ENCODE measurements at regions of chr7 and their contacts with region 1.

Region 1: DNA sequence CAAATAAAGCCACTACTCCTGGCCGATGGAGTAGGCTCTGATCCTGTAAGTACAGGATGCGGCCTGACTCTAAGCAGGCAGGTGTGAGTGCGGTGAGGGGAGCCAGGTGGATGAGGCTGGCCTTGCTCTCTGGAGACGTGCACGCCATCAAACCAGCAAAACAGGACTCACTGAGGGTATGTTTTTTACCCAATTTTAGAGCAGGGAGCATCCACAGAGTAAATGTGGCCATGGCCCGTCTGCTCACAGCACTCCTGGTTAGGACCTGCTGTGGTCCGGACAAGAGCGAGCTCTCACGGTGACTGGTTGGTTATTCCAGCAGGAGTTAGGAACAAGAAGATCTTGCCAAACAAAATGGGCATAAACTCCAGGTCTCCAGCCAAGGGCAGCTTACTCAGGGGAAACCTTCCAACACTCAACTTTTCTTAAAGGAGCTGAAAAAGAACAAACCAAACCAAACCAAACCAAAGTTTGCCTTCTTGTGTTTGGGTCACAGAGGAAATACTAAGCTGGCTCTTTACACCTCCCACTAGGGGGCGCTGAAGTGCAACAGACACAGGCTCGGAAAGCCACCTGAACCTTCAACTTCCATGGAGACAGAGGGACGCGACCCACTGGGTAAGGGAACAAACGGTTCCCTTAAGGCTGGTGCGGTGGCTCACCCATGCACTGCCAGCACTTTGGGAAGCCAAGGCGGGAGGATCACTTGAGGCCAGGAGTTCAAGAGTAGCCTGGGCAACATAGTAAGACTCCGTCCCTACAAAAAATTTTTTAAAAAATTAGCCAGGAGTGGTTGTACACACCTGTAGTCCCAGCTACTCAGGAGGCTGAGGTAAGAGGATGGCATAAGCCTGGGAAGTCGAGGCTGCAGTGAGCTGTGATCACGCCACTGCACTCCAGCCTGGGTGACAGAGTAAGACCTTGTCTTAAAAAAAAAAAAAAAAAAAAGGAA is 122.4 kb downstream of the CLEC2L start:
- DNase-seq: peak; percentile 71 to 84
- ATAC-seq: peak; percentile 78

Region 2: DNA sequence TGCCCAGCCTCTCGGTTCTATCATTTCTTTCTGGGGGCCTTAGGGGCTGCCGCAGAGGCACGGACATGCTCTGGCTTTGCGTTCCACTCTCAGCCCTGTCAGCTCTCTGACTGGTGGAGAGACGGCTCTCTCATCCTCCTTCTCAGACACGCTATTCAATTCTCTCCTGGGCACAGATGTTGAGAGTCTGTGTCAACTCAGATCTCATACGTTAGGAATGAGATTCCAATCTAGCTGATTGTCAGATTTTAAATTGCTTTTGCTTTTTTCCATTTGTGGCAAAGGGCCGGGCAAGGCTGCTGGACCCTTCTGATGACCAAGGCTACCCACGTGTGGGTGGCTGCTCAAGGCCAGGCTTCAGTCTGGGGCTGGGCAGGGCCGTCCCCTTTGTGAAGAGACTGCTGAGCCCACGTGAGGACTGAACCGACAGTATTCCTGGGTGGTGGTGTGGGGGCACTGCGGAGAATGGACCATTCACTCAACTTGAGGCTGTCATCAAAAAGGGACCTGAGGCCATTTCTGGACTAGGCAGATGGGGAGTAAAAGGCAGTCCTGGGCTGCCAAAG is 50.9 kb before region 1 on chr7:
- intact Hi-C with region 1: loop called in 1 of 2 experiments (anchors 5 kb)
- DNase-seq: no peak
- ATAC-seq: no peak

Region 3: GRCh38 chr7:139777948-139778841 is 132.3 kb after region 1 on chr7 and contains the start of gene HIPK2:
- intact Hi-C with region 1: loop called in 1 of 2 experiments (anchors 10 kb)
- DNase-seq: peak; percentile 76 to 85
- ATAC-seq: peak; percentile 82
- total RNA-seq, gene HIPK2: 36.4 to 37.8 TPM

Measured in left colon (tissue), 2 donors.